GM18951 (cell line): ENCODE measurements at regions of chr10 and their contacts with region 1.

Region 1: GRCh38 chr10:119859420-119860258 is 13.0 kb downstream of the MCMBP start:
- POLR2A ChIP-seq: no peak

Region 2: DNA sequence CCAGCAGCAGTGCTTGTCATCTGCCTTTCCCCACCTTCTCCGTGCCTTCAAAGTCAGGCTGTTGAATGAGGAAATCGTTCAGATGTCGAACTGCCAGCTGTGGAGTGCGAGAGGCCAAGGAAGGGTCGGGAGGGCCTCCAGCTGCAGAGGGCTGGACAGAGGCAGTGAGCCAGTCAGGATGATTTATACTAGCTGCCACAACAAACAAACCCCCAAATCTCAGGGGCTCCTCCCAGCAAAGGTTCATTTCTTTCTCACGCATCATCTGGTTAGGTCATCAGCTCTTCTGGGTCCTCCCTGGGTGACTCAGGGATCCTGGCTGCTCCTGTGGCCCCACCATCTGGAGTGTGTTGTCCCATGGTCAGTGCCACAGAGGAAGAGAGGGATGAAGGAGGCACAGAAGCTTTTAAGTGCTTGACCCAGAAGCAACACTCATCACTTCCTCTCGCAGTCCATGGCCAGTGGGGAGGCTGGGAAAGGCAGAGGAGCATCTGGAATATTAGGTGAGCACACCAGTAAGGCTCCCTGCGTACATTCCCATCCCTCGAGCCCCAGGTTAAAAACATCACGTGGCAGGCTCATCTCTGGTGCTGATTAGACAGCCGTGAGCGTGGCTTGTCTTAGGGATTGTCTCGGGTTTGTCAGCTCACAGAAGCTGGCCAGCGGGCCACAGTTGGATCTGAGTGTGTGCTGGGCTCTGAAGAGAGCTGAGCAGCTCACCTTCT is 457.8 kb before region 1 on chr10:
- in situ Hi-C with region 1: no loop called
- POLR2A ChIP-seq: no peak

Region 3: GRCh38 chr10:119686439-119687191 is 173.0 kb before region 1 on chr10:
- in situ Hi-C with region 1: loop called (anchors 10 kb)
- POLR2A ChIP-seq: no peak